Calu3 (cell line): ENCODE measurements at regions of chr17 and their contacts with region 1.

Region 1: DNA sequence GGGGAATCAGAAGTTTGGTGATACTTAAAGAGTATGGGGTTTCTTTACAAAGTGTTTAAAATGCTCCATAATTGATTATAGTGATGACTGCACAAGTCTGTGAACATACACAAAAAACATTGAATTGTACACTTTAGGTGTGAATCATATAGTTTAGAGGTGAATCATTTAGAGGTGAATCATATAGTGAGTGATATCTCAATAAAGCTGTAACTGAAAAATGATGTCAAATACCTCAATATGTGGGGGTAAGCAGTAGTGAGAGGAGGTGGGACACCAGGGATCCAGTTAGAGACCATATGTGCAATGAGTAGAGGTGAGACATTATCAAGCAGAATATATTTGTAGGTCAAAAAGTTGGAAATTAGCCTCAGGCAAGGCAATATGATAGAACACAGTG is 264.5 kb downstream of the PMP22 start:
- DNase-seq: no peak
- H3K4me3 Mint-ChIP-seq: no peak overlapping the region
- H3K27ac Mint-ChIP-seq: no peak overlapping the region
- H3K4me1 Mint-ChIP-seq: no peaks in the 10 kb centered on the region
- H3K27me3 Mint-ChIP-seq: no peaks in the 10 kb centered on the region
- CTCF ChIP-seq: no peak

Region 2: GRCh38 chr17:14098224-14098623 is 902.4 kb before region 1 on chr17:
- CTCF ChIA-PET with region 1: interaction called, 10 read pairs
- intact Hi-C with region 1: no loop called
- DNase-seq: peak; percentile 25
- H3K4me3 Mint-ChIP-seq: no peak overlapping the region
- H3K27ac Mint-ChIP-seq: no peak overlapping the region
- H3K4me1 Mint-ChIP-seq: peaks cover 8% of the 10 kb centered on the region
- H3K27me3 Mint-ChIP-seq: no peaks in the 10 kb centered on the region
- CTCF ChIP-seq: no peak

Region 3: GRCh38 chr17:15038656-15039055 is 38.0 kb after region 1 on chr17:
- CTCF ChIA-PET with region 1: no interaction called
- intact Hi-C with region 1: no loop called
- DNase-seq: no peak
- H3K4me3 Mint-ChIP-seq: no peak overlapping the region
- H3K27ac Mint-ChIP-seq: no peak overlapping the region
- H3K4me1 Mint-ChIP-seq: no peaks in the 10 kb centered on the region
- H3K27me3 Mint-ChIP-seq: no peaks in the 10 kb centered on the region
- CTCF ChIP-seq: no peak